ENCODE measurements at regions of chr18 and their contacts with region 1.

Region 1: GRCh38 chr18:47150029-47150823 is at the start of gene HDHD2:
- DNase-seq: peak; percentile 69
- ATAC-seq: peak; percentile 92
- H3K4me3 ChIP-seq: peak within 1 kb of the TSS; percentile 77
- H3K27ac ChIP-seq: peak within 1 kb of the TSS; percentile 95
- H3K4me1 ChIP-seq: peaks cover 5% of the 10 kb centered on the region
- H3K27me3 ChIP-seq: no peaks in the 10 kb centered on the region
- CTCF ChIP-seq: no peak
- POLR2A ChIP-seq: peak; percentile 66; the same call in 1 of the 2 replicates
- RAD21 ChIP-seq: no peak
- total RNA-seq, gene HDHD2: 16.7 and 18.6 TPM in 2 replicates

Region 2: GRCh38 chr18:47110492-47111274 is 39.5 kb before region 1 on chr18:
- CTCF ChIA-PET with region 1: interaction called, 3 read pairs
- POLR2A ChIA-PET with region 1: no interaction called
- dilution Hi-C with region 1: no loop called
- in situ Hi-C with region 1: no loop called
- intact Hi-C with region 1: loop called (anchors 1 kb)
- DNase-seq: peak; percentile 33
- ATAC-seq: no peak
- H3K4me3 ChIP-seq: no peak overlapping the region
- H3K27ac ChIP-seq: no peak overlapping the region
- H3K4me1 ChIP-seq: no peaks in the 10 kb centered on the region
- H3K27me3 ChIP-seq: no peaks in the 10 kb centered on the region
- CTCF ChIP-seq: no peak
- POLR2A ChIP-seq: no peak
- RAD21 ChIP-seq: no peak

Region 3: DNA sequence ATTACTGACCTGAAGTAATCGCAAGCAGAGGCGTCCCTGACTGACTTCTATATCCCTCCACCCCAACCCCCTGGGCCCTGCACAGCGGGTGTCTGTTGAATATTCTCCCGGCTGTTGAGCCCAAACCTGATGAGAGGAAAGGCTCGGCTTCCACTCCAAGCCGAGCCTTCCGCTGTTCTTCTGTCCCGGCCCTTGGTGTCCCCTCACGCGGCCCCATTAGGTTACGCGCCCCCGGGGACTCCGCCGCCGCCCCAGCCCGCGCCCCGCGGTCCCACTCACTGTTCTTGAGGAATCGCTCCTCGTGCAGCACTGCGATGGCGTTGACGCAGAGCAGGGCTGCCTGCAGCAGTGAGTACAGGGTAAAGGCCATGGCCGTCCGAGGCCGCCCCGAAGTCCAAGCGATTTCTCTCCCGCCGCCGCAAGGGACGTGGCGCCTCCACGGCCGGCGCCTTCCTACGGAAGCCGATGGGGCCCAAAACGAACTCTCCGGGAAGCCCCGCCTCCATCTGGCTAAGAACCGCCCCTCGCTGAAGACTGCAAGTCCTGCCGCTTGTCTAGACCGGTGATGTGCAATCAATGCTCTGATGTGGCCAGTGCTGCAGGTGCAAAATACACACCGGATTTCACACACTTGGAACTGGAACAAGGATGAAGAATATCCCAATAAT is 25.8 kb after region 1 on chr18 and contains the start of gene IER3IP1:
- CTCF ChIA-PET with region 1: no interaction called
- POLR2A ChIA-PET with region 1: no interaction called
- dilution Hi-C with region 1: no loop called
- in situ Hi-C with region 1: no loop called
- intact Hi-C with region 1: loop called (anchors 1 kb)
- DNase-seq: peak; percentile 91
- ATAC-seq: peak; percentile 96
- H3K4me3 ChIP-seq: peak within 1 kb of the TSS; percentile 73
- H3K27ac ChIP-seq: peak within 1 kb of the TSS; percentile 83
- H3K4me1 ChIP-seq: peaks cover 4% of the 10 kb centered on the region
- H3K27me3 ChIP-seq: peaks cover 4% of the 10 kb centered on the region
- CTCF ChIP-seq: no peak
- POLR2A ChIP-seq: peak; percentile 79
- RAD21 ChIP-seq: no peak
- total RNA-seq, gene IER3IP1: 7.0 and 19.7 TPM in 2 replicates

Region 4: GRCh38 chr18:47215554-47216138 is 65.4 kb after region 1 on chr18:
- CTCF ChIA-PET with region 1: no interaction called
- POLR2A ChIA-PET with region 1: no interaction called
- dilution Hi-C with region 1: no loop called
- in situ Hi-C with region 1: no loop called
- intact Hi-C with region 1: no loop called
- DNase-seq: peak; percentile 52
- ATAC-seq: peak; percentile 80
- H3K4me3 ChIP-seq: no peak overlapping the region
- H3K27ac ChIP-seq: no peak overlapping the region
- H3K4me1 ChIP-seq: no peaks in the 10 kb centered on the region
- H3K27me3 ChIP-seq: peaks cover 3% of the 10 kb centered on the region
- CTCF ChIP-seq: peak; percentile 57
- POLR2A ChIP-seq: no peak
- RAD21 ChIP-seq: peak; percentile 70